Activated T-helper 1 cell treated with anti-CD3 and anti-CD28 coated beads, Interleukin-12 subunit alpha, Interleukin-12 subunit beta, Interleukin-2, Interleukin-4 antibody, amounts not matched to agents 30 ng/mL and 10 ng/mL and 1 ng/mL, durations not matched to agents 14 hours and 24 hours and 36 hours (primary cell): ENCODE measurements at regions of chr16 and their contacts with region 1.

Region 1: DNA sequence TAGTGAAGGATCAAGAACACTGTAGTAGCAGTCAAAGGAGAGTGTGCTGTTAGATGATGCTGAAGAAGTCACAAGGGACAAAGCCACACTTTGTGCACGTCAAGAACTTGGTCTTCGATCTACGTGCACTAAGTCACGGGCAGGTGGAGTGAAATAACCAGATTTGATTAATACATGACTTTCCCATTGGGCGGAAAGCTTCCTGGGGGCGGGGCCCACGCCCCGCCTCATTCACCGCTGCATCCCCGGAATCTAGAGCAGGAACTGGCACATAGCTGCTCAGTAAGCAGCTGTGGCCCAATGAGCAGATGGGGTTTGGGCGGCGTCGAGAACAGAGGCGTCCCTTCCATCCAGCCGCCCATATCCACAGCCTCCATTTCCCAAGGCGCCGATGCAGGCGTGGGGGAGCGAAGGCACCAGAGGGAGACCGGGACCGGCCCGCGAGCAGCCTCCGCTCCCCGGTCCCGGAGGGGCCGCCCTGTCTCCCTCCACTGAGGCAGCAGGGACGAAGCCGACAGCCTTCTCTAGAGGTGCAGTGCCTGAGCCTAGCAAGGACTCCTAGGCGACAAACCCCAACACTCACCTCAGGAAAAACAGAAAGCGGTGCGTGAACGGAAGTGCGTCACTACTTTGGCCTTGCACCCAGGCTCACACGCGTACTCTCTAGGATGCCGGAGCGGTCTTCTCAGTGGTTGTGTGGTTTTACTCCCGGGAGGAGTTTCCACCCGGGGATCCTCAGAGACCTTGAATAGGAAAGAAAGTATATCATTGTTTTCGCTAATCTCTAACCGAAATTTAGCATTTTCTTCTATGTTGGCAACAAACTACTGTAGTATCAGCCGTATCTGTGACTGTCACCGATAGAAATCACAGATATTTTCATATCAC is 4.9 kb downstream of the ZNF19 start:
- DNase-seq: peak; percentile 67
- H3K4me3 Mint-ChIP-seq: peak overlapping the region; percentile 86
- H3K27ac Mint-ChIP-seq: peak overlapping the region; percentile 75
- H3K4me1 Mint-ChIP-seq: peaks cover 18% of the 10 kb centered on the region
- H3K27me3 Mint-ChIP-seq: no peaks in the 10 kb centered on the region

Region 2: GRCh38 chr16:71461686-71462648 is 22.3 kb before region 1 on chr16 and contains the start of gene ZNF23:
- intact Hi-C with region 1: loop called (anchors 1 kb)
- DNase-seq: peak; percentile 71
- H3K4me3 Mint-ChIP-seq: peak within 1 kb of the TSS; percentile 86
- H3K27ac Mint-ChIP-seq: peak within 1 kb of the TSS; percentile 86
- H3K4me1 Mint-ChIP-seq: peaks cover 13% of the 10 kb centered on the region
- H3K27me3 Mint-ChIP-seq: peaks cover 1% of the 10 kb centered on the region
- total RNA-seq, gene ZNF23: 4.9 and 6.4 TPM in 2 replicates

Region 3: GRCh38 chr16:71467810-71468209 is 16.4 kb before region 1 on chr16:
- intact Hi-C with region 1: loop called (anchors 1 kb)
- DNase-seq: no peak
- H3K4me3 Mint-ChIP-seq: no peak overlapping the region
- H3K27ac Mint-ChIP-seq: no peak overlapping the region
- H3K4me1 Mint-ChIP-seq: peaks cover 5% of the 10 kb centered on the region
- H3K27me3 Mint-ChIP-seq: peaks cover 1% of the 10 kb centered on the region

Region 4: GRCh38 chr16:71515026-71515425 is 30.8 kb after region 1 on chr16:
- intact Hi-C with region 1: no loop called
- DNase-seq: no peak
- H3K4me3 Mint-ChIP-seq: no peak overlapping the region
- H3K27ac Mint-ChIP-seq: no peak overlapping the region
- H3K4me1 Mint-ChIP-seq: no peaks in the 10 kb centered on the region
- H3K27me3 Mint-ChIP-seq: no peaks in the 10 kb centered on the region

Region 5: DNA sequence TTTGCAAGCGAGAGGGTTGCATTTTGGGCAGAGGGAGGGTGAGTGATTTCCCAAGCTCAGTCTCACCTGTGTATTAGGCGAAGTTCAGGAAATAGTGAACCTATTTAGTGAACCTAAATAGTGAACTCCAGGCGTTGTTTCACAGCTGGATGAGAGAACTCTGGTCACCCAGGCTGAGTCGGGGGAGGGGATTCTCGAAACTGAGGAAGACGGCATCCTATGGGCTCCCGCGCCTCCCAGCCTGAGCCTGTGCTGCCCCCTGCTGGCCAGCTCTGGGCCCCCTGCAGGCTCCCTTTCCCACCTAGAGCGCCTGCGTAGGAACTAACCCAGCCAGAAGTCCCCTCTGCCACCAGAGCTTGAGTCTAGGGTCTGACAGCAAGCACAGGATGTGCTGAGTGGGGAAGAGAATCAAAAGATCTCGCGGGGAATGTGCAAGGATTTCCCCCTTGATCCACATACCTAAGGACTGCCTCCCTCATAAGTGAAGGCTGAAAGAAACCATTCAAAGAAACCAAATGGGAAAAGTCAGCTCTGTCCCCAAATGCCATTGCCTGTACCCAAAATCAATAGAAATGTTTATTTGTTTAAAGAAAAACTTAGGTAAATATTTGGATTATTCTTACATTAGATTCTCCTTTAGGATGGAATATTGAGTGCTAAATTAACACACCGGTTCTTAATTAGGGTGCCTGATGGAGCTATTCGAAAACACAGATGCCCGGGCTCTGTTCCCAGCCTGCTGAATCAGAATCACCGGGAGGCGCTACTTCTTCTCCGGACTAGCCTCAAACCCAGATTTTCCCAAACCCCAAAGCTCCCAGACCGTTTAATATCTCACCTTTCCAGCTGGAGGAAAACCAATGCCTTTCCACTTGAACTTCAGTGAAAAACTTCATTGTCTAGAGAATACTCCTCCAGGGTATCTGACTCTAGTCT is 127.0 kb after region 1 on chr16:
- intact Hi-C with region 1: loop called (anchors 1 kb)
- DNase-seq: peak; percentile 59
- H3K4me3 Mint-ChIP-seq: no peak overlapping the region
- H3K27ac Mint-ChIP-seq: no peak overlapping the region
- H3K4me1 Mint-ChIP-seq: no peaks in the 10 kb centered on the region
- H3K27me3 Mint-ChIP-seq: peaks cover 29% of the 10 kb centered on the region

Region 6: GRCh38 chr16:72008424-72009216 is 524.4 kb after region 1 on chr16 and contains the start of gene DHODH:
- intact Hi-C with region 1: loop called (anchors 5 kb)
- DNase-seq: peak; percentile 98
- H3K4me3 Mint-ChIP-seq: peak within 1 kb of the TSS; percentile 99
- H3K27ac Mint-ChIP-seq: peak within 1 kb of the TSS; percentile 99
- H3K4me1 Mint-ChIP-seq: peaks cover 16% of the 10 kb centered on the region
- H3K27me3 Mint-ChIP-seq: no peaks in the 10 kb centered on the region
- total RNA-seq, gene DHODH: 31.0 and 33.1 TPM in 2 replicates

Region 7: DNA sequence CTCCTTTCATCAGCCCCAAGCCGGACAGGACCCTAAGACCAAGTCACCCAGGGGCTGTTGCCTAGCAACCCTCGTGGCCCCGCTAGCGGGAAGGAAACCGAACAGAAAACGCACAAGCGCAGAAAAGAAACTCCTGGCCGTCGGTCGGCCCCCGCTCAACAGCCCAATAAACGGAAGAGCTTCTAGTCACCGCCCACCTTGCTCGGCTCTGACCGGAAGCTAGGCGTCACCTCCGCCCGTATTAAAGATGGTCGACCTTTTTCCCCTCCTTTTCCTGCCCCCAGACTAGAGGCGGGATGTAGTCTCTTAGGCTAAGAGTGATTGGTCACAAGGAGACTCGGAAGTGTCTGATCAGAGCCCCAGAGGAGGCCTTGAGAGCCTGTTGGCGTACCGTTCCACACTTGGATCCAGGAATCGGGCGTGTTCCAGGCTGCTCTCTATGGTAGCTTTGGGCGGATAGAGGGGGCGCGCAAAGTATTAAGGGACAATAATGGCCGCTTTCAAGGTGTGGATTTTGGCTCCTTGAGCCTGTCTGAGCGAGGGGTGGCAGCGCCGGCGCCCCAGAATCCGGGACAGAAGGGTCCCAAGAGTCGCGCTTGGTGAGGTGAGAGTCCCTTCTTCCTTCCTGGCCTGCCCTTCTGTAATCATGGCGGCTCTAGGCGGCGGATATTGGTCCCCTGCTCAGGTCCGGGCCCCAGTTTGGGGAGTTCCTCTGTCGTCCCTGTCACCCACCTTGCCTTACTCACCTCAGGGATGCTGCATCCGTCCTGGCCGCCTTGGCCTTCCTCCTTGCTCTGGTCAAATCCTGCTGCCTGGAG is 609.4 kb after region 1 on chr16 and contains the starts of genes DHX38 and TXNL4B:
- intact Hi-C with region 1: loop called (anchors 5 kb)
- DNase-seq: peak; percentile 92
- H3K4me3 Mint-ChIP-seq: peak within 1 kb of the TSS; percentile 99
- H3K27ac Mint-ChIP-seq: peak within 1 kb of the TSS; percentile 99
- H3K4me1 Mint-ChIP-seq: peaks cover 64% of the 10 kb centered on the region
- H3K27me3 Mint-ChIP-seq: no peaks in the 10 kb centered on the region
- total RNA-seq, gene DHX38: 89.8 and 99.4 TPM in 2 replicates
- total RNA-seq, gene TXNL4B: 24.0 and 25.1 TPM in 2 replicates